ENCODE measurements at regions of chr20 and their contacts with region 1.

Region 1: GRCh38 chr20:46406199-46406985 is at the start of gene ELMO2:
- DNase-seq: peak; percentile 94
- H3K4me3 ChIP-seq: peak within 1 kb of the TSS; percentile 87 to 95 (median 94)
- H3K27ac ChIP-seq: peak within 1 kb of the TSS; percentile 45
- H3K4me1 ChIP-seq: peaks cover 26% of the 10 kb centered on the region
- H3K27me3 ChIP-seq: no peaks in the 10 kb centered on the region
- CTCF ChIP-seq: peak in 1 of 2 donors; percentile 9
- total RNA-seq, gene ELMO2: 29.6 to 44.0 TPM

Region 2: DNA sequence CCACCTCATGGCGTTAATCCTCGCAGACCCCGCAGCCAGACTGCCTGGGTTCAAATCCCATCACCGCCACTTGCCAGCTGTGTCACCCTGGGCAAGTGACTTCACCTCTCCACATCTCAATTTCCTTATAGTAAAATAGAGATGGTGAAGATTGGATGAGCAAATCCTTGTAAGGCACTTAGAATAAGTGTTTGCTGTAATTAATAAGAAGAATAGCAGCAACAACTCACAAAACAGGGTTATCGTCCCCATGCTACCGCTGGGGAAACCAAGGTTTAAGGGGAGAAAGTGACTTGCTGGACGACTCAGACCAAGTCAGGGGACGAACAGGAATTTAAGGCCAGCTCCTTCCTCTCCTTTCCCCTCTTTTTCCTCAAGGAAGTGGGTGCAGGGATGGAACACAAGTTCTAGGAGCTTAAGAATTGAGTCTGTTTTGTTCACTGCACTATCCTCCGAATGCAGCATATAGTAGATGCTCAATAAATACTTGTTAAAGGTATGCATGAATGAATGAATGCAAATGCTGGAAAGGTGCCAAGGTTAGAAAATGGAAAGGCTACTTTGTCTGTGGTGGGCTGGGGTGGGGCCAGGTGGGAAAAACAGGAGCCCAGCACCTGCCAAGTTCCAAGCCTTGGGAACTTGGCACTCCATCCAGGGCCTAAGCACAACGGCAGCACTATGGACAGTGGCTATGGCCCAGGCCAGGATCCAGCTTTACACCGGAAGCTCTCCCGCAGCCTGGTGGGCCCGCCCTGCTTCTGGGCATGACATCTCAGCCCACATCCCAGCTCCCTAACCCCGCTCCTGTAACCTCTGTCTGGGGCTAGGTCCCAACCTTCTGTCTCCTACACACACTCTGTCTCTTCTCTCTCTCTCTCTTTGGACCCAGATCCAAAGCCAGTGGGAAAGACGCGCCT is 93.2 kb before region 1 on chr20:
- CTCF ChIA-PET with region 1: no interaction called
- dilution Hi-C with region 1: no loop called
- in situ Hi-C with region 1: no loop called
- intact Hi-C with region 1: no loop called
- DNase-seq: no peak
- H3K4me3 ChIP-seq: no peak overlapping the region
- H3K27ac ChIP-seq: no peak overlapping the region
- H3K4me1 ChIP-seq: peaks cover under 1% of the 10 kb centered on the region
- H3K27me3 ChIP-seq: peaks cover 26% of the 10 kb centered on the region
- CTCF ChIP-seq: no peak

Region 3: GRCh38 chr20:46363800-46364634 is 42.4 kb before region 1 on chr20:
- CTCF ChIA-PET with region 1: no interaction called
- dilution Hi-C with region 1: no loop called
- in situ Hi-C with region 1: no loop called
- intact Hi-C with region 1: loop called (anchors 2 kb)
- DNase-seq: peak; percentile 80
- H3K4me3 ChIP-seq: peak overlapping the region; percentile 66 to 99 (median 91)
- H3K27ac ChIP-seq: peak overlapping the region; percentile 88
- H3K4me1 ChIP-seq: peaks cover 7% of the 10 kb centered on the region
- H3K27me3 ChIP-seq: no peaks in the 10 kb centered on the region
- CTCF ChIP-seq: no peak